ENCODE measurements at regions of chr9 and their contacts with region 1.

Region 1: GRCh38 chr9:26551971-26552370 is 340.6 kb downstream of the CAAP1 start:
- DNase-seq: no peak
- ATAC-seq: no peak
- H3K4me3 ChIP-seq: no peak overlapping the region
- H3K27ac ChIP-seq: no peak overlapping the region
- H3K4me1 ChIP-seq: no peaks in the 10 kb centered on the region
- H3K27me3 ChIP-seq: no peaks in the 10 kb centered on the region
- CTCF ChIP-seq: no peak
- EP300 ChIP-seq: no peak
- POLR2A ChIP-seq: no peak
- RAD21 ChIP-seq: no peak

Region 2: GRCh38 chr9:26516773-26517343 is 35.1 kb before region 1 on chr9:
- CTCF ChIA-PET with region 1: no interaction called
- POLR2A ChIA-PET with region 1: no interaction called
- in situ Hi-C with region 1: no loop called
- intact Hi-C with region 1: loop called (anchors 1 kb)
- DNase-seq: no peak
- ATAC-seq: no peak
- H3K4me3 ChIP-seq: no peak overlapping the region
- H3K27ac ChIP-seq: no peak overlapping the region
- H3K4me1 ChIP-seq: no peaks in the 10 kb centered on the region
- H3K27me3 ChIP-seq: no peaks in the 10 kb centered on the region
- CTCF ChIP-seq: no peak
- EP300 ChIP-seq: no peak
- POLR2A ChIP-seq: no peak
- RAD21 ChIP-seq: no peak

Region 3: GRCh38 chr9:26537211-26537610 is 14.8 kb before region 1 on chr9:
- CTCF ChIA-PET with region 1: no interaction called
- POLR2A ChIA-PET with region 1: no interaction called
- in situ Hi-C with region 1: no loop called
- intact Hi-C with region 1: no loop called
- DNase-seq: no peak
- ATAC-seq: no peak
- H3K4me3 ChIP-seq: no peak overlapping the region
- H3K27ac ChIP-seq: no peak overlapping the region
- H3K4me1 ChIP-seq: no peaks in the 10 kb centered on the region
- H3K27me3 ChIP-seq: no peaks in the 10 kb centered on the region
- CTCF ChIP-seq: no peak
- EP300 ChIP-seq: no peak
- POLR2A ChIP-seq: no peak
- RAD21 ChIP-seq: no peak

Region 4: DNA sequence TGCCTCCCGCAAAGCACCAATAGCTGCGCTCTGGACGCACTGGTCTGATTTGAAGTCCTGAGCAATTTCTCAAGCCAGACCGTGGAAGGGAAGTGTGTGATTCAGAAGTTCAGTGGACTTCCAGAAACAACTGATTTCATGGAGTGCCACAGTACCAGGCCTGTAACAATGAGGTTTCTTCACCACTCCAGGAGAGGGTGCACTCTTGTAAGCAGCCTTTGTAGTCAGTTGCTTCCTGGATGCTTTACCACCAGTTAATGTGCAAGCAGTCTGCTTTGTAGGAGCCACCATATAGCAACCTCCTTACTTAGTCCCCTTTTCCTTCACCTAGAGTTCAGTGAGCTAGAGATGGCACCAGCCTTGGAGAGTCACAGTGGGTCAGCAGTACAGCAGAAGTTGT is 328.3 kb after region 1 on chr9:
- CTCF ChIA-PET with region 1: no interaction called
- POLR2A ChIA-PET with region 1: no interaction called
- in situ Hi-C with region 1: no loop called
- intact Hi-C with region 1: no loop called
- DNase-seq: no peak
- ATAC-seq: peak; percentile 80
- H3K4me3 ChIP-seq: no peak overlapping the region
- H3K27ac ChIP-seq: no peak overlapping the region
- H3K4me1 ChIP-seq: no peaks in the 10 kb centered on the region
- H3K27me3 ChIP-seq: no peaks in the 10 kb centered on the region
- CTCF ChIP-seq: no peak
- EP300 ChIP-seq: no peak
- POLR2A ChIP-seq: no peak
- RAD21 ChIP-seq: no peak